K562 (cell line): ENCODE measurements at regions of chr12 and their contacts with region 1.

Region 1: GRCh38 chr12:79886917-79887519 is 47.9 kb downstream of the PPP1R12A start:
- DNase-seq: peak; percentile 13 to 55 (median 18)
- ATAC-seq: peak; percentile 83
- H3K4me3 ChIP-seq: no peak overlapping the region
- H3K27ac ChIP-seq: no peak overlapping the region
- H3K4me1 ChIP-seq: peaks cover 0 to 9% of the 10 kb centered on the region in 2 experiments; a peak in 3 of 5 replicates
- H3K27me3 ChIP-seq: no peaks in the 10 kb centered on the region
- CTCF ChIP-seq: peak; percentile 34 to 58 (median 39); a peak in 4 of 6 replicates
- EP300 ChIP-seq: no peak
- POLR2A ChIP-seq: no peak
- RAD21 ChIP-seq: peak; percentile 38 to 71; a peak in 3 of 4 replicates

Region 2: GRCh38 chr12:79706215-79706614 is 180.8 kb before region 1 on chr12:
- CTCF ChIA-PET with region 1: no interaction called
- POLR2A ChIA-PET with region 1: no interaction called
- in situ Hi-C with region 1: no loop called
- intact Hi-C with region 1: no loop called
- DNase-seq: no peak
- ATAC-seq: no peak
- H3K4me3 ChIP-seq: no peak overlapping the region
- H3K27ac ChIP-seq: no peak overlapping the region
- H3K4me1 ChIP-seq: peaks cover 0 to 6% of the 10 kb centered on the region in 2 experiments; a peak in 1 of 5 replicates
- H3K27me3 ChIP-seq: no peaks in the 10 kb centered on the region
- CTCF ChIP-seq: no peak
- EP300 ChIP-seq: no peak
- POLR2A ChIP-seq: no peak
- RAD21 ChIP-seq: no peak

Region 3: DNA sequence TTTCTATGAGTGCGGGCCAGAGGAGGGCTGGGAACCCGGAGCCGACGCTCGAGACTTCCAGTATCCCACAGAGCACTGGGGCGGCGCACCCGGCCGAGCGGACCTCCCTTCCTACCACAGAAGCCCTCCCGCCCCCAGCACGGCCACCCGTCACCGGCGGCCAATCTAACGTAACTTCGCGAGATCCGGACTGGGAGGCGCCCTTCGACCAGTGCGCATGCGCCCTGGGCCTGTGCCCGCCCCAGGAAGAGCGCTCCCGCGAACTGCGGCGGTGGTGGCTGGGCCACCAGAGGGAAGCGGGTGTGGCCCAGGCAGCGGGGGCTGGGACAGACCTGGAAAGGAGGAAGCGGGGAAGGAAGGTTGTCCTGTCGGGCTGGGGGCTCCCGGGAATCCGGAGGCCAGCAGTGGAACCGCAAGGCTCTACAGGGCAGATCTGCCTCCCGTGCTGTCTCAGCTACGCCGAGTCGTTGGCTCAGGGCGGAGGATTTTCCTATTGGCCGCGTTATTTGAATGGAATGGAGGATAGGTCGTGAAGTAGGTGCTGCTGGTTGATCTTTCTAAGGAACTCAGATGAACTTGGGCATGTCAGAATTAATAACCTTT is 48.1 kb after region 1 on chr12 and contains the start of gene PPP1R12A:
- CTCF ChIA-PET with region 1: no interaction called
- POLR2A ChIA-PET with region 1: no interaction called
- in situ Hi-C with region 1: no loop called
- intact Hi-C with region 1: loop called (anchors 2 kb)
- DNase-seq: peak; percentile 91 to 98 (median 94)
- ATAC-seq: peak; percentile 89
- H3K4me3 ChIP-seq: peak within 1 kb of the TSS; percentile 91
- H3K27ac ChIP-seq: peak within 1 kb of the TSS; percentile 97
- H3K4me1 ChIP-seq: peaks cover 3 to 11% of the 10 kb centered on the region in 2 experiments; a peak in 3 of 5 replicates
- H3K27me3 ChIP-seq: no peaks in the 10 kb centered on the region
- CTCF ChIP-seq: peak in 1 of 3 experiments; percentile 11; a peak in 1 of 6 replicates
- EP300 ChIP-seq: no peak
- POLR2A ChIP-seq: peak; percentile 96
- RAD21 ChIP-seq: peak in 1 of 2 experiments; percentile 19; a peak in 1 of 4 replicates
- polyA plus RNA-seq, gene PPP1R12A: 26.4 to 42.3 TPM

Region 4: DNA sequence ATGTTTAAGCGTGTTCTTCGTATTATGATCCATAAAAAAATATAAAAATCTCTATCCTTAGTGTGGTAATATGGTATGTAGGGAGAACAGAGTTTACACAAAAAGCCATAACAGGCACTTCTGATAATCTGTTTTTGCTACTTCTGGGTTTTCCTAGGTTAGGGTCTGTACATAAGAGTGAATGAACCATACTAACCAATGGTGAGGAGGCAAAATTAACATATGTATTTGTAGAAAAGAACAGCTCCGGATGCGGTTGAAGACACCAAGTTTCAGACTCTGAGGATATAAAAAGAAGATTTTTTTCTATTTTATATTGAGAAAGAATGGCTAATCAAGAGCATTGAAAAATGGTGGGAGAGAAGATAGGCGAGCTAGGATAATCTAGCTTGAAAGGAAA is 88.1 kb after region 1 on chr12:
- CTCF ChIA-PET with region 1: no interaction called
- POLR2A ChIA-PET with region 1: no interaction called
- in situ Hi-C with region 1: no loop called
- intact Hi-C with region 1: loop called (anchors 5 kb)
- DNase-seq: no peak
- ATAC-seq: no peak
- H3K4me3 ChIP-seq: no peak overlapping the region
- H3K27ac ChIP-seq: no peak overlapping the region
- H3K4me1 ChIP-seq: no peaks in the 10 kb centered on the region
- H3K27me3 ChIP-seq: peaks cover 0 to 8% of the 10 kb centered on the region in 2 experiments; a peak in 3 of 5 replicates
- CTCF ChIP-seq: no peak
- EP300 ChIP-seq: no peak
- POLR2A ChIP-seq: no peak
- RAD21 ChIP-seq: no peak

Region 5: GRCh38 chr12:79993106-79993862 is 106.3 kb after region 1 on chr12:
- CTCF ChIA-PET with region 1: no interaction called
- POLR2A ChIA-PET with region 1: no interaction called
- in situ Hi-C with region 1: no loop called
- intact Hi-C with region 1: loop called (anchors 5 kb)
- DNase-seq: no peak
- ATAC-seq: peak; percentile 35
- H3K4me3 ChIP-seq: no peak overlapping the region
- H3K27ac ChIP-seq: no peak overlapping the region
- H3K4me1 ChIP-seq: peaks cover 3 to 7% of the 10 kb centered on the region in 2 experiments; a peak in 2 of 5 replicates
- H3K27me3 ChIP-seq: no peaks in the 10 kb centered on the region
- CTCF ChIP-seq: no peak
- EP300 ChIP-seq: no peak
- POLR2A ChIP-seq: no peak
- RAD21 ChIP-seq: no peak

Region 6: DNA sequence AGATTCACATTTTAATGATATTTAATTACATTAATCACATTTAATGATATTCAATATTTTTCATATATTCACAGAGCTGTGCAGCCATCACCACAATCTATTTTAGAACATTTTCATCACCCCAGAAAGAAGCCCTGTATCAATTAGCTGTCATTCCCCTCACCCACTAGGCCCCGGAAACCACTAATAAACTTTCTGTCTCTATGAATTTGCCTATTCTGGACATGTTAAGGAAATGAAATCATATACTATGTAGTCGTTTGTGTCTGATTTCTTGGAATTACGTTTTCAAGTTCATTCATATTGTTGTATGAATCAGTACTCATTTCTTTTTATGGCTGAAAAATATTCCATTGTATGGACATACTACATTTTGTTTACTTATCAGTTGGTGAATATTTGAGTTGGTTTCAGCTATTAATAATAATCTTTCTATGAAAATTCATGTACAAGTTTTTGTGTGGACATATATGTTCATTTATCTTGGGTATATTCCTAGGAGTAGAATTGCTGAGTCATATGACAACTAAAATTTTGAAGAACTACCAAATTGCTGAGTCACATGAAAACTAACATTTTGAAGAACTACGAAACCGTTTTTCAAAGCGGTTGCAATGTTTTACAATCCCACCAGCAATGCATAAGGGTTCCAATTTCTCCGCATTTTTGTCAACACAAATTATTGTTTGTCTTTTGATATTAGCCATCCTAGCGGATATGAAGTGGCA is 200.6 kb after region 1 on chr12:
- CTCF ChIA-PET with region 1: no interaction called
- POLR2A ChIA-PET with region 1: no interaction called
- in situ Hi-C with region 1: no loop called
- intact Hi-C with region 1: loop called (anchors 10 kb)
- DNase-seq: peak in 1 of 4 experiments; percentile 32
- ATAC-seq: peak; percentile 63
- H3K4me3 ChIP-seq: no peak overlapping the region
- H3K27ac ChIP-seq: peak overlapping the region; percentile 76
- H3K4me1 ChIP-seq: peaks cover 0 to 12% of the 10 kb centered on the region in 2 experiments; a peak in 3 of 5 replicates
- H3K27me3 ChIP-seq: no peaks in the 10 kb centered on the region
- CTCF ChIP-seq: no peak
- EP300 ChIP-seq: no peak
- POLR2A ChIP-seq: no peak
- RAD21 ChIP-seq: no peak

Region 7: GRCh38 chr12:80186727-80187217 is 299.8 kb after region 1 on chr12:
- CTCF ChIA-PET with region 1: interaction called, 4 read pairs
- POLR2A ChIA-PET with region 1: no interaction called
- in situ Hi-C with region 1: no loop called
- intact Hi-C with region 1: loop called (anchors 10 kb)
- DNase-seq: peak; percentile 8 to 69 (median 30)
- ATAC-seq: peak; percentile 95
- H3K4me3 ChIP-seq: no peak overlapping the region
- H3K27ac ChIP-seq: no peak overlapping the region
- H3K4me1 ChIP-seq: no peaks in the 10 kb centered on the region
- H3K27me3 ChIP-seq: no peaks in the 10 kb centered on the region
- CTCF ChIP-seq: peak; percentile 51 to 80 (median 67); a peak in 5 of 6 replicates
- EP300 ChIP-seq: no peak
- POLR2A ChIP-seq: no peak
- RAD21 ChIP-seq: peak; percentile 77 to 78

Region 8: DNA sequence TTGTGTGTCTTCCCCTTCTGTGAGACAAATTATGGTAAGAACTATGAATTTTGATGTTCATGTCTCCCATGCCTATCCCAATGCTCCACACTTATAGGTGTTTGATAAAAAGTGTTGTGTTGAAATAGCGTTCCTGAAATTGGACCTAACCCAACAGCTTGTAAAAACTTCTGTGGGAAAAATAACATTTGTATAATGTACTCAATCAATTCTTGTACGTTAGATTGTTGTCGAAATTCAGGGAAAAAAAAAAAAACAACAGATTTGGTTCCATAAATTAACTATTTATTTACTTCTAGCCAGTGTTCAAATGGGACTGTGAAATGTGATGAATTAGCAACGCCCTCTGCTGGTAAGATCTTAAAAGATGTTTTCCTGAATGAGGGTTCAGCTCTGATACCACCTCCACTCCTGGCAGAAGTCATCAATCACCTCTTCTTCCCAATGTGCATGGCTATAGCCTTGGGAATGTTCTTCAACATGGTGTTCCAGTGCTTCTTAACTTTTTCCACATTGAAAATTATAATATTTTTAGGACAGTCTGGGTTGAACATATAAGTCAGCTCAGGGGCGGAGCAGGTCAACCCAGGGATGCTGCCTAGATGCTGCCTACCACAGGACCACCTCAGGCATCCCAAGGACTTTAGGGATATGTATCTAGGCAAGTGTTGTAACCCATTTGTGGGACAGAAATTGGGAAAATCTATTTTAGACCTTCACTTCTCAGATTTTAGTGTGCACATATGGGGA is 383.0 kb after region 1 on chr12:
- CTCF ChIA-PET with region 1: no interaction called
- POLR2A ChIA-PET with region 1: no interaction called
- in situ Hi-C with region 1: no loop called
- intact Hi-C with region 1: loop called (anchors 1 kb)
- DNase-seq: peak; percentile 7 to 41 (median 14)
- ATAC-seq: peak; percentile 70
- H3K4me3 ChIP-seq: no peak overlapping the region
- H3K27ac ChIP-seq: no peak overlapping the region
- H3K4me1 ChIP-seq: no peaks in the 10 kb centered on the region
- H3K27me3 ChIP-seq: no peaks in the 10 kb centered on the region
- CTCF ChIP-seq: peak in 2 of 3 experiments; percentile 35 to 49; a peak in 3 of 6 replicates
- EP300 ChIP-seq: no peak
- POLR2A ChIP-seq: no peak
- RAD21 ChIP-seq: peak; percentile 56 to 69